A549 (cell line): ENCODE measurements at regions of chr19 and their contacts with region 1.

Region 1: GRCh38 chr19:46990991-46991676 is 28.5 kb upstream of the NPAS1 start:
- DNase-seq: peak; percentile 77 to 85
- ATAC-seq: peak; percentile 70 to 87
- H3K4me3 ChIP-seq: no peak overlapping the region
- H3K27ac ChIP-seq: peak overlapping the region; percentile 31 to 65; a peak in 3 of 6 replicates
- H3K4me1 ChIP-seq: peaks cover 9% of the 10 kb centered on the region; the same call in 2 of the 3 replicates
- CTCF ChIP-seq: peak; percentile 97
- EP300 ChIP-seq: no peak
- POLR2A ChIP-seq: no peak
- RAD21 ChIP-seq: peak; percentile 99

Region 2: DNA sequence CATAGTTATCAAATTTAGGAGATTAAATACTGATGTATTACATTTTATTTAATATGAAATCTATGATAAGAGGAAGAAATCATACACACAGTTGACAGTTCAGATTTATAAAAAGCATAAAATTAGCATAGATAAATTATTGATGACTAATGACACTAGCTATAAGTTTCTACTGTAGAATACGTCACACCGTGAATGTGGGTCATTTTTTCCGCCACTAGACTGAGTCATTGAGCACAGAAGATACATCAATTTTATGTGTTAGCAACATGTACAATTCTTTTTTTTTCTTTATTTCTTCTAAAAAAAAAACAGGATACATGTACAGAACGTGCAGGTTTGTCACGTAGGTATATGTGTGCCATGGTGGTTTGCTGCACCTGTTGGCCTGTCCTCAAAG is 162.7 kb before region 1 on chr19:
- CTCF ChIA-PET with region 1: interaction called, 10 read pairs
- POLR2A ChIA-PET with region 1: no interaction called
- DNase-seq: no peak
- ATAC-seq: no peak
- H3K4me3 ChIP-seq: no peak overlapping the region
- H3K27ac ChIP-seq: no peak overlapping the region
- H3K4me1 ChIP-seq: peaks cover 10% of the 10 kb centered on the region
- CTCF ChIP-seq: no peak
- EP300 ChIP-seq: no peak
- POLR2A ChIP-seq: no peak
- RAD21 ChIP-seq: no peak

Region 3: GRCh38 chr19:46872967-46873366 is 118.2 kb before region 1 on chr19:
- CTCF ChIA-PET with region 1: interaction called, 47 read pairs
- POLR2A ChIA-PET with region 1: no interaction called
- DNase-seq: no peak
- ATAC-seq: no peak
- H3K4me3 ChIP-seq: no peak overlapping the region
- H3K27ac ChIP-seq: peak overlapping the region in 1 of 2 experiments; percentile 1; a peak in 1 of 6 replicates
- H3K4me1 ChIP-seq: peaks cover 42% of the 10 kb centered on the region
- CTCF ChIP-seq: no peak
- EP300 ChIP-seq: no peak
- POLR2A ChIP-seq: no peak
- RAD21 ChIP-seq: no peak

Region 4: GRCh38 chr19:46904114-46905060 is 86.7 kb before region 1 on chr19:
- CTCF ChIA-PET with region 1: interaction called, 52 read pairs
- POLR2A ChIA-PET with region 1: no interaction called
- DNase-seq: no peak
- ATAC-seq: no peak; a peak in 2 of 6 replicates
- H3K4me3 ChIP-seq: no peak overlapping the region
- H3K27ac ChIP-seq: peak overlapping the region in 1 of 2 experiments; percentile 5; a peak in 1 of 6 replicates
- H3K4me1 ChIP-seq: peaks cover 62% of the 10 kb centered on the region
- CTCF ChIP-seq: no peak
- EP300 ChIP-seq: no peak
- POLR2A ChIP-seq: no peak
- RAD21 ChIP-seq: no peak

Region 5: GRCh38 chr19:46944918-46945628 is 46.1 kb before region 1 on chr19:
- CTCF ChIA-PET with region 1: interaction called, 52 read pairs
- POLR2A ChIA-PET with region 1: no interaction called
- DNase-seq: no peak
- ATAC-seq: peak in 1 of 2 experiments; percentile 52; a peak in 3 of 6 replicates
- H3K4me3 ChIP-seq: no peak overlapping the region
- H3K27ac ChIP-seq: peak overlapping the region in 1 of 2 experiments; percentile 1; a peak in 1 of 6 replicates
- H3K4me1 ChIP-seq: peaks cover 40% of the 10 kb centered on the region
- CTCF ChIP-seq: no peak
- EP300 ChIP-seq: no peak
- POLR2A ChIP-seq: no peak
- RAD21 ChIP-seq: no peak

Region 6: DNA sequence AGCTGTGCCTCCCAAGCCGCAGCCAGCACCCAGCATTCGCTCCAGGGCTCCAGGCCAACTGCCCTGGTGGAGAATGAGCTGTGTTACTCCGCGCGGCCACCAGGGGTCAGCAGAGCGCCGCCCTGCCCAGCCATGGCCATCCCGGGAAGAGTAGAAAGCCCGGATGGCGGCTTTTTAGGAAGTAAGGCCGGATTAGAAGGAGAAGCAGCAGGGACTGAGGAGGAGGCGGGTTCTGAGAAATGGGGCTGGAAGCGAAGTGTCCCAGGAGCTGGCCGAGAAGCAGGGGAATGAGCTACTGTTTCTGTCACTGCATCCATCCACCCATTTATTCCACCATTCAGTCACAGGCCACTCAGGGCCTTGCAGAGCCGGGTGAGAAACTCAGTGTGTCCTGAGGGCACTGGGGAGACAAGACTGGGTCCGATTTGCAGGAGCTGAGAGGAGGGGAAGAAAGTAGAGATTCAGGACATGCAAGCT is 21.9 kb after region 1 on chr19:
- CTCF ChIA-PET with region 1: interaction called, 156 read pairs
- POLR2A ChIA-PET with region 1: no interaction called
- DNase-seq: peak in 1 of 2 experiments; percentile 83
- ATAC-seq: peak; percentile 94 to 96
- H3K4me3 ChIP-seq: no peak overlapping the region
- H3K27ac ChIP-seq: peak overlapping the region; percentile 47 to 76
- H3K4me1 ChIP-seq: peaks cover 4% of the 10 kb centered on the region; the same call in 1 of the 3 replicates
- CTCF ChIP-seq: peak; percentile 95
- EP300 ChIP-seq: no peak
- POLR2A ChIP-seq: no peak
- RAD21 ChIP-seq: peak; percentile 98

Region 7: DNA sequence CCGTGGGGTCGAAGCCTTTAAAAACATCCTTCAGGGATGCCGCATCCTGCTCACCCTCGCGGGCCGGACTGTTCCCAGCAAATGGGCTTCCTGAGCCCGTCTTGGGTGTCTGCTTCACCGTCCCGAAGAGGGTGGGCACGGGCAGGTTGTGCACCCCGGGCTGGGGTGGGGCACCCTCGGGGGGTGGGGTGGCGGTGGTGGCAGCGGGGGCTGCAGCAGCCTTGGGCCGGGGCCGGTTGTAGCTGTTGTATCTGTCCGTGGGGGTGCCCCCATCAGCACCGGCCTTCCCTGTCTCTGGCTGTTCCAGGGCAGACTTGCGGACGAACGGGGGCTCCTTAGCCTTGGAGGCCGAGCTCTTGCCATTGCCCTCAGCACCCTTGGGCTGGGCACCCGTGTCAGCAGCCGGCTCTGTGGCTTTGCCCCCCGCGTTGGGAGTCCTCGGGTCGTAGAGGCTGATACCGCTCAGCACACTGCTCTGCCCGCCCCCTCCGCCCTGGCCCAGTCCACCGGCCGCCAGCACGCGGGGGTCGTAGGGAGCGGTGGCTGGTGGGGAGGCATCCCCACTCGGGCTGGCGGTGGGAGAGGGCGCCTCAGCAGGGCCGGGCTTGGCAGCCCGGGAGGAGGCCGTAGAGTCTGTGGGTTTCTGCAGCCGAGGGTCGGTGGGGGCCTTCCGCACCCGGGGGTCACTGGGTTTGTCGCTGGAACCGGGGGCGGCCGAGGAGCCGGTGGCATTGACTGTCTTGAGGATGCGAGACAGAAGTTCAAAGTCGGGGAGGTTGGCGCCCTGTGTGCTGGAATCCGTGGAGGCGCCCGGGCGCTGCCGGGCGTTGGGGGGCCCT is 75.5 kb after region 1 on chr19:
- CTCF ChIA-PET with region 1: no interaction called
- POLR2A ChIA-PET with region 1: no interaction called
- DNase-seq: no peak
- ATAC-seq: no peak
- H3K4me3 ChIP-seq: no peak overlapping the region
- H3K27ac ChIP-seq: no peak overlapping the region
- H3K4me1 ChIP-seq: no peaks in the 10 kb centered on the region
- CTCF ChIP-seq: no peak
- EP300 ChIP-seq: no peak
- POLR2A ChIP-seq: no peak
- RAD21 ChIP-seq: no peak

Region 8: DNA sequence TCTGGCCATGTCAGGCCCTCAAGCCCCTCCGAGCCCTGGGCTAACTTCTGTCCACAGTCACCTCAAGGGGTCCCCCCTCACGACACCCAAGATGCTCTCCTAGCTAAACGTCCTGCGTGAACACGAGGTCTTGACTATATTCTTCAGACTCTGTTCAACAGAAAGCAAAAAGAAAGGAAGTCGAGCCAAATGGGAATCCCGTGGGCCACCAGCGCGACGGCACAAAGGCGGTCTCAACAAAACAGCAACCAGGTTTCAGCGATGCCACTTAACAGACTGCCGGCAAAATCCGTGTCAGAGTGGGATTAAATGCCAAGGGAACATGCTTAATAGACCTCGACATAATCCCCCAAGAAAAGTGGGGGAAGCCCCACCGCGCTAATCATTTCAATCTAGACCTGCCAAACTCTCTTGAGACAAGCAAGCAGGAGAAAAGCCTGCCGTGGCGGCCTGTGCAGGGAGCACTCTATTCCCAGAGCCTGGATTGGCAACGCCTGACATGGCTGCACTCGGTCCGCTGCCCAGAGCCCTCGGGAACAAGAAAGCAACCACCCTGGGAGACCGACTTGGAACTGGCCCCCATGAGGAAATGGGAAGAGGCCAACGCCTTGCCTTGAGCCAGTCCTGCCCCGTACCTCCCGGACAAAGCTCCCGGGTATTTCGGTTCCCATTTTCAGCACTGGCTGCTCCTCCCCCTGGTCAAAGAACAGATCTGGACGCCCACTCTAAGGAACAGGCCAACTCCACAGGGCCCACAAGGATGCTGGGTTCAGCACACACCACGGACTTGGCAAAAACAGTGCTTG is 106.5 kb after region 1 on chr19:
- CTCF ChIA-PET with region 1: no interaction called
- POLR2A ChIA-PET with region 1: no interaction called
- DNase-seq: no peak
- ATAC-seq: no peak
- H3K4me3 ChIP-seq: no peak overlapping the region
- H3K27ac ChIP-seq: no peak overlapping the region
- H3K4me1 ChIP-seq: peaks cover 26% of the 10 kb centered on the region
- CTCF ChIP-seq: no peak
- EP300 ChIP-seq: no peak
- POLR2A ChIP-seq: no peak
- RAD21 ChIP-seq: no peak